Dorsolateral prefrontal cortex (tissue), 120 donors: ENCODE measurements at regions of chr9 and their contacts with region 1.

Region 1: GRCh38 chr9:96514108-96514799 is 64.3 kb downstream of the HABP4 start:
- DNase-seq: no peak
- H3K4me3 ChIP-seq: no peak overlapping the region
- H3K27ac ChIP-seq: peak overlapping the region in 52 of 59 donors; percentile 2 to 85 (median 66)
- H3K27me3 ChIP-seq: no peaks in the 10 kb centered on the region
- CTCF ChIP-seq: no peak

Region 2: GRCh38 chr9:96476591-96476990 is 37.7 kb before region 1 on chr9:
- intact Hi-C with region 1: no loop called
- DNase-seq: no peak
- H3K4me3 ChIP-seq: no peak overlapping the region
- H3K27ac ChIP-seq: peak overlapping the region in 2 of 59 donors; percentile 2
- H3K27me3 ChIP-seq: no peaks in the 10 kb centered on the region
- CTCF ChIP-seq: no peak

Region 3: GRCh38 chr9:96555567-96556386 is 41.5 kb after region 1 on chr9:
- intact Hi-C with region 1: loop called (anchors 5 kb)
- DNase-seq: no peak
- H3K4me3 ChIP-seq: peak overlapping the region in 16 of 59 donors; percentile 0 to 41 (median 11)
- H3K27ac ChIP-seq: peak overlapping the region in 58 of 59 donors; percentile 4 to 95 (median 88)
- H3K27me3 ChIP-seq: no peaks in the 10 kb centered on the region
- CTCF ChIP-seq: no peak